ENCODE measurements at regions of chr1 and their contacts with region 1.

Region 1: DNA sequence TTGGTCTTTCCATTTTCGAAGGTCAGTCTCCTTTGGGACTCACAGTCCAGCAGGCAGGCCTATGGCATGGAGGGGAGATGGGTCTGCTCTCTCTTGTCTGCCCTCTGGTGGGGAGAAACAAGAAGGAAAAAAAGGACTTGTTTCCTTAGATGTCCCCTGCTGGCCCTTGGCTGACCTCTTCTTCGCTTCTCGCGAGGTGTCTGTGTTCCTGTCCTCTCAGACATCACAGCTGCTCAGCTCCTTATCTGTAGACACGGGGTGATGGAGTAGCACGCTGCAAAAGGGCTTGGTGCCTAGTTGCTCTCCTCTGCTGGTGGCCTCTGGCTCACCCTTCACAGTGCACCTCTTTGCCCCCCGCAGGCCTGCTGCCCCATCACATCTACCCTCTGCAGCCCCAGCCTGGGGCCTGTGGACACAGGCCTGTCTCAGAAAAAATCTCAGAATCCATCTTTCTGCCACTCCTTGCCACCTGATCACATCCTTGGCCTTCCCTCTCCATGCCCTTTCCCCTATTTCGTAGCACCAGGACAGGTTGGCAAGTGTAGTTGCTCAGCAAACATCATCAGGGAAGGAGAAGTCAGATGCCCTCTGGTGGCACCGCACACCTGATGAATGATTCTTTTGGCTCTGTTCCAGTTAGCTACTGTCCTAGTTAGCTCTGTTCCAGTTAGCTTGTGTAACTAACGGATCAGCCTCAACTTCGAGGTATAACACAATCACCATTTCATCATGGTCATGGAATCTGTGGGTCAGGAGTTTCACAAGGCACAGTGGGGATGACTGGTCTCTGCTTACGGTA is 18.7 kb upstream of the AK2 start:
- DNase-seq: peak; percentile 75
- H3K4me3 ChIP-seq: no peak overlapping the region
- H3K27ac ChIP-seq: no peak overlapping the region
- H3K27me3 ChIP-seq: no peaks in the 10 kb centered on the region
- CTCF ChIP-seq: peak; percentile 87

Region 2: DNA sequence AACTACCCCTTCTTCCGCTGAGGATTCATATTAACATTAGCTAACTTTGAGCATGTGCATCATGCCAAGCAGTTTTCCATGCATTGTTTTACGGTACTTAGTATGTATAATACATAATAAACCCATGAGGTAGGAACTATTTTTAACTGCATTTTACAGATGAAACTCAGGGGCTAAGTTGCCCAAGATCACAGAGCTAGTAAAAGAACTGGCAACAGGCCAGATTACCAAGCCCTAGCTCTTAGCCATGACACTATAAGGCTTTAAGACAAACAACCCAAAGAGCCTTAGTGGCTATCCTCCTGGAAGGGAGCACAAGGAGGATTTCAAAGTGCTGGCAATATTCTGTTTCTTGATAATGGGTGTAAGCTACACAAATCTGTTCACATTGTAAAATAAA is 24.8 kb before region 1 on chr1:
- CTCF ChIA-PET with region 1: interaction called, 18 read pairs
- POLR2A ChIA-PET with region 1: no interaction called
- DNase-seq: no peak
- H3K4me3 ChIP-seq: no peak overlapping the region
- H3K27ac ChIP-seq: no peak overlapping the region
- H3K27me3 ChIP-seq: no peaks in the 10 kb centered on the region
- CTCF ChIP-seq: no peak

Region 3: GRCh38 chr1:33111970-33112369 is 56.6 kb after region 1 on chr1:
- CTCF ChIA-PET with region 1: no interaction called
- POLR2A ChIA-PET with region 1: no interaction called
- DNase-seq: no peak
- H3K4me3 ChIP-seq: no peak overlapping the region
- H3K27ac ChIP-seq: no peak overlapping the region
- H3K27me3 ChIP-seq: no peaks in the 10 kb centered on the region
- CTCF ChIP-seq: peak; percentile 47; the same call in 1 of the 2 replicates

Measured in AG04450 (cell line).